OCI-LY7 (cell line): ENCODE measurements at regions of chr22 and their contacts with region 1.

Region 1: DNA sequence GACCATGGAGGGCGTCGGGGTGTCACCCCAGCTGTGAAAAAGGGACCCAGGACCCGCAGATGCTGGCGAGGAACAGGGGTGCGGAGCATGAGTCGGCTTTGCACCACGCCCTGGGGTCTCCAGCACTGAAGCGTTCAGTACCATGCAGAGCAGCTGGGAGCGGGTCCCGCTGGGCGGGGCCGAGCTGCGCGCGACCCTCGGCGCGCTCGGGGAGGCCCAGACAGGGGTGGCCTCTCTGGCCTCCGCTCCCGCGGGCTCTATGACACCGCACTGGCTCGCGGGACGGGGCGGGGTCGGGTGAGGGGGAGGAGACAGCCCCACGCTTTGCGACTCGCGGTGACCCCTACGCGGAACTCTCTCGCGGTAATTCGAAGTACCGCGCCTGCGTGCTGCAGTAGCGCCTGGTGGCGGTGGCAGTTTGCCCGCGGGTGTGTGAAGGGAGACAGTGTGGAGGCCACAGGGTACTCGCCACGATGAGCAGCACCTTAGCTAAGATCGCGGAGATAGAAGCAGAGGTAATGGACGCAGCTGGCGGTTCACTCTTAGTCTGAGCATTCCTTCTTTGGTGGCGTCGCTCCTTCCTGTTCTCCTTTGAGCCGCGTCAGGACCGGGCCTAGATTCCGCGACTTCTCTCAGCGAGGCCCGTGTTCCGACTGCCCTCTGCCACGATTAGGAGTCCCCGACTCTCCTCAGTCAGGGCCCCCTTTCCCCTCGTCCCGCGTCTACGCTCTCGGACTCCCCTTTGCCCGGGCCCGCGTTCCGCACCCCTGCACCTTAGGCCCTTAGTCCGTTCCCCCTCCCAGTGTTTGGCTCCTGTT is at the start of gene DRG1:
- DNase-seq: peak; percentile 97
- H3K4me3 ChIP-seq: peak within 1 kb of the TSS; percentile 92
- H3K27ac ChIP-seq: peak within 1 kb of the TSS; percentile 54
- H3K4me1 ChIP-seq: peaks cover 21% of the 10 kb centered on the region
- CTCF ChIP-seq: no peak; the same call in 1 of the 2 replicates
- total RNA-seq, gene DRG1: 59.4 and 62.4 TPM in 2 replicates

Region 2: DNA sequence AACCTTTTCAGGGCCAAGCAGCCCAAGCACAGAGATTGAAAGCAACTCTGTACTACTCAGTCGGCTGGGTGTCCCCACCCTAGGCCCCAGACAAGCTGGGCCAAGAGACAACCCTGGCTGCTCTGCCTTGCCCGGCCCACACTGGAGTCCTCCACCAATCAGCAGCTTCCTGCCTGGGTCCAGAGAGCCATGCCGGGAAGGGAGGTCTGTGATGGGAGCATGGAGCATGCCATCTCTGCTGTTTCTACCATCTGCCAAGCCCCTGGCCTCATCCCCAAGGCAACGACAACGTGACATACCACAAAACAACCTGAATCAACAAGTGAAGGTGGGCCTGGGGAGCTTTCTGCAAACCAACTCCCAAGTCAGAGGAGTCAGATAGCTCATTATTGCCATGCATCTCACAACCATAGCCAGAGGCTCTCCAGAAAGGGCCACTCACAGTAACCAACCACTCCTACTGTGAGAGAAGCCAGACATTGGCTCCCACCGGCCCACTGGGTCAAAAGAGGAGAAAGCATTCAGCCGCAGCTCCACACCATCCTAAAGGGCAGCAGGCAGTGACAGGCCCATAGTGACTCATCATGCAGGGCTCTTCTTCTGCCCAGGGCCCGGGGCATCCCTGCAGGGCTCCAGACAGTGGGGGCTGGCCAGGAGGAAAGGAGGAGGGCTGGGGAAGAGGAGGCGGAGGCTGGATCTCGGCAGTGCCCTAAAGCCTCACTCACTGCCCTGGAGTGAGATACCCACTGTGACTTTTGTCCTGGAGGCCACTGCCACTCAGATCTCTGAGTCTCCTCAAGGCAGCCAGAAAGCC is 71.3 kb before region 1 on chr22:
- CTCF ChIA-PET with region 1: no interaction called
- POLR2A ChIA-PET with region 1: no interaction called
- intact Hi-C with region 1: no loop called
- DNase-seq: no peak
- H3K4me3 ChIP-seq: no peak overlapping the region
- H3K27ac ChIP-seq: no peak overlapping the region
- H3K4me1 ChIP-seq: no peaks in the 10 kb centered on the region
- CTCF ChIP-seq: no peak

Region 3: GRCh38 chr22:31345331-31346254 is 53.8 kb before region 1 on chr22:
- CTCF ChIA-PET with region 1: no interaction called
- POLR2A ChIA-PET with region 1: interaction called, 4 read pairs
- intact Hi-C with region 1: loop called (anchors 1 kb)
- DNase-seq: peak; percentile 96
- H3K4me3 ChIP-seq: peak overlapping the region; percentile 84
- H3K27ac ChIP-seq: peak overlapping the region; percentile 76
- H3K4me1 ChIP-seq: peaks cover 30% of the 10 kb centered on the region
- CTCF ChIP-seq: peak; percentile 80

Region 4: DNA sequence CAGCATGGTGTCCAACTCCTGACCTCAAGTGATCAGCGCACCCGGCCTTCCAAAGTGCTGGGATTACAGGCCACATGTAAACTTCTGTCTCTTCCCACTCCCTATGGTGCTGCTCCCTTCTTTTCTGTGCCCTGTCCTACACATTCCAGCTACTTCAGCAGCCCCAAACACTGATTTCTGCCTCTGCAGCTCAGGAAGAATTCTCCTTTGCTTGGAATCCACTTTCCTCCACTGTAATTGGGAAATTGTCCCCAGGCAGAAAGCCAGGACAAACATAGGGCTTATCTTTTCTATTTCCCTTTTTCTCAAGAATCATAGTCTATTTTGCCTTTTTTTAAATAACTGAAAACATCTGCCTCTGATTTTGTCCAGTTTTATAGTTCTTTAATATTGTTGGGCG is 21.3 kb before region 1 on chr22:
- CTCF ChIA-PET with region 1: no interaction called
- POLR2A ChIA-PET with region 1: interaction called, 10 read pairs
- intact Hi-C with region 1: no loop called
- DNase-seq: no peak
- H3K4me3 ChIP-seq: no peak overlapping the region
- H3K27ac ChIP-seq: no peak overlapping the region
- H3K4me1 ChIP-seq: peaks cover 4% of the 10 kb centered on the region
- CTCF ChIP-seq: no peak

Region 5: GRCh38 chr22:31496007-31496734 is 96.8 kb after region 1 on chr22 and contains the start of gene SFI1:
- CTCF ChIA-PET with region 1: no interaction called
- POLR2A ChIA-PET with region 1: no interaction called
- intact Hi-C with region 1: loop called (anchors 1 kb)
- DNase-seq: peak; percentile 95
- H3K4me3 ChIP-seq: peak within 1 kb of the TSS; percentile 89
- H3K27ac ChIP-seq: peak within 1 kb of the TSS; percentile 93
- H3K4me1 ChIP-seq: peaks cover 42% of the 10 kb centered on the region
- CTCF ChIP-seq: peak; percentile 64
- total RNA-seq, gene SFI1: 72.6 and 73.3 TPM in 2 replicates